Right ventricle myocardium inferior (tissue), 1 donor: ENCODE measurements at regions of chr9 and their contacts with region 1.

Region 1: DNA sequence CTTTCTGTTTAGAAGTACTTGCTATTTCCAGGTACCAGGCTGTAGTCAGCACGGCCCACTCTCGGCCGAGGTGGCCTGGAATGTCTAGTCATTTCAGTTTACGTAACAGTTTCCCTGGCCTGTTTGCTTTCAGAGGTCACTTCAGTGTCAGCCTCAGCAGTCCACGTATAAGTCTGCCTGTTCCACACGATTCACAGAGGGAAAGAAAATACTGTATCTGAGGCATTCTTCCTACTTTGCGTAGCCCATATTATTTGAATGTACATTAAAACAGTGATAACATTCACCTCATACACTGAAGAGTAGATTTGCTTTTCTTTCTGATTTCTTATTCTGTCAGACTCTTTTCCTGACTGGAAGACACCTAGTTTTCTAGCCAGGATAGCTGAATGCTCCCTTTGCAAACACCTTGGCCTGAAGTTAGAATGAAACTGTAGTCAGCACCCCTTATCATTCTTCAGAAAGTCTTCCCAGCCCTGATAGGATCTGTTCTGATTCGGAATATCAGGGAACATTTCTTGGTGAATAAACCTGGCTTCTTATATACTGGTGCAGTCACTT is 140.9 kb downstream of the AOPEP start:
- DNase-seq: peak; percentile 78
- ATAC-seq: peak; percentile 85

Region 2: GRCh38 chr9:94726495-94727191 is 140.7 kb before region 1 on chr9 and contains the start of gene AOPEP:
- intact Hi-C with region 1: loop called (anchors 5 kb)
- DNase-seq: peak; percentile 100
- ATAC-seq: peak; percentile 100
- total RNA-seq, gene AOPEP: 180 TPM

Region 3: GRCh38 chr9:94783102-94783664 is 84.2 kb before region 1 on chr9:
- intact Hi-C with region 1: loop called (anchors 5 kb)
- DNase-seq: no peak
- ATAC-seq: peak; percentile 79

Region 4: GRCh38 chr9:94812343-94812742 is 55.0 kb before region 1 on chr9:
- intact Hi-C with region 1: loop called (anchors 5 kb)
- DNase-seq: no peak
- ATAC-seq: peak; percentile 42

Region 5: GRCh38 chr9:94952565-94953373 is 85.4 kb after region 1 on chr9:
- intact Hi-C with region 1: loop called (anchors 5 kb)
- DNase-seq: no peak
- ATAC-seq: peak; percentile 42

Region 6: DNA sequence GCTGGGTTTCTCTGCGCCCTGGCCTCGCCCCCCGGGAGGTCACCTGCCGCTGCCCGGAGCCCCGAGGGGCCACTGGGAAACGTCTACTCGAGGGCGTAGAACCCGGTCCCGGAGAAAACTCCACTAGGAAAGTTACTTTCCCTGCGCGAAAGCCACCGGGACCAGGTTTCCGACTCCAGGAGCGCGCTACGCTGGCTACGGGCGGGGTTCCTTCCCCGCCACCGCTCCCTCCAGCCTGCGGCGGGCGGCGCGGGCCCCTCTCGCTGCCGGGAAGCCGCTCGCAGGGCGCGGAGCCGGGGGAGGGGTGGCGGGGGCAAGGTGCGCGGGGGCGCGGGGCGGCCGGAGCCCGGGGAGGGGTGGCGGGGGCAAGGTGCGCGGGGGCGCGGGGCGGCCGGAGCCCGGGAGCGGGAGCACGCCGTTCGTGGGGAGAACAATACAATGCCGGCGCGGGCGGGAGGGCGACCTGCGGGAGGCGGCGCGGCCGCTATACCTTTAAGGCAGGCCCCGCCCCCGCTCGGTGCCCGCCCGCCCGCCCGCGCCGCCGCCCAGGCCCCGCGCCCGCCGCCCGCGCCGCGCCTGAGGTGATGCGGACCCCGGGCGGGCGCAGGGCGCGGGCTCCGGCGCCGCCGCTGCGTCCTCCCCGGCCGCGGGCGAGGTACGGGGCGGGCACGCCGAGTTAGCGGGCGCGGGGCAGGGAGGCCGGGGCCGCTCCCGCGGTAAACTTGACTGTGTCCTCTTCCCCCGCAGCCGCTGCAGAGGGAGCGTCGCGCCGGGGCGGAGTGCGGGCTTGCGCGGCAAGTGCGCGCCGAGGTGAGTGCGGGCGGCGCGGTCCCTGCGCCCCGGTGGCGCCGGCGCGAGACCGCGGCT is 137.3 kb after region 1 on chr9:
- intact Hi-C with region 1: loop called (anchors 1 kb)
- DNase-seq: peak; percentile 78
- ATAC-seq: peak; percentile 56

Region 7: DNA sequence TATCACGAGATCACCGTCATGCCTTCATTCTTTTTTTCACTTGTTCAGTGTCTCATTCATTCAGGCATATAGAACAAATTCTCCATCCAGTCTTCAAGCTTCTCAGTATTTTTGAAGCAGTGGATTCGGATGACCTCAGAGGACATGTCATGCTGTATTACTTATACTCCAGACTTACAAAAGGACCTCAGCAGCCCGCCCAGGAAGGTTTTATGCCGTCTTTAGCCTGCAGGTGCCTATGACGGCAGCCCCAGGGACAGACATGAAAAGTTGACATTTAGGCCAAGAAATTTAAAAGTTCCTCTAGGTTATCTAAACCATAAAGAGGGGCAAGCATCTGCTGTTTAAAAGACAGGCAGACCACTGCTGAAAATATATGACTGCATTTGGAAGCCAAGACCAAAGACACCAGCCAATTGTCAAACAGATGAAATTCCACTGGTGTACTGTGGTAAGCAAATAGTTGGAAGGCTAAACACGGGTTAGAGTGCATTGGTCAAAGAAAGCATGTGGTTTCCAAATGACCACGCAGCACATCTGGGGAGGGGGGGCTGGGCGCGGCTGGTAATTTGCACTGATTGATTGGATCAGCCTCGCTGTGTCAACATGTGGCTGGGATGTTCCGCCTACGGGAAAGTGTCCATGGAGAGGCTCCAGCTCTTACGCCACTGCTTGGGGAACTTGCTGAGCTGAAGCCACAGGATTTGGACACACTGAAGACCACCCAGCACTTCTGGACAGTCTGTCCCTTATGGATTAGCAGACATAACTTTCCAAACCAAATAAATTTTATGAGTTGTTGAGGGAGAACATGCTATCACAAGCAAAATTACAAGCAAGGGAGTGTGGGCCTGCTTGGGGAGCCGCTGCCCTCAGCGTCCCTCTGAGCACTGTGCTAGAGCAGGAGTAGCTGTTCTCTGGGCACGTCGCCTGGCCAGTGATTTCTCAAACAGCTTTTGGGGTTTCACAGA is 276.5 kb after region 1 on chr9:
- intact Hi-C with region 1: no loop called
- DNase-seq: peak; percentile 90
- ATAC-seq: peak; percentile 93

Region 8: GRCh38 chr9:95206143-95206542 is 338.8 kb after region 1 on chr9:
- intact Hi-C with region 1: no loop called
- DNase-seq: no peak
- ATAC-seq: no peak